ENCODE measurements at regions of chr17 and their contacts with region 1.

Region 1: GRCh38 chr17:48363161-48363560 is 66.9 kb downstream of the SKAP1 start:
- DNase-seq: no peak
- ATAC-seq: no peak
- H3K4me3 ChIP-seq: no peak overlapping the region
- H3K27ac ChIP-seq: no peak overlapping the region
- H3K4me1 ChIP-seq: no peaks in the 10 kb centered on the region
- H3K27me3 ChIP-seq: no peaks in the 10 kb centered on the region
- CTCF ChIP-seq: no peak
- EP300 ChIP-seq: no peak
- POLR2A ChIP-seq: no peak
- RAD21 ChIP-seq: no peak

Region 2: DNA sequence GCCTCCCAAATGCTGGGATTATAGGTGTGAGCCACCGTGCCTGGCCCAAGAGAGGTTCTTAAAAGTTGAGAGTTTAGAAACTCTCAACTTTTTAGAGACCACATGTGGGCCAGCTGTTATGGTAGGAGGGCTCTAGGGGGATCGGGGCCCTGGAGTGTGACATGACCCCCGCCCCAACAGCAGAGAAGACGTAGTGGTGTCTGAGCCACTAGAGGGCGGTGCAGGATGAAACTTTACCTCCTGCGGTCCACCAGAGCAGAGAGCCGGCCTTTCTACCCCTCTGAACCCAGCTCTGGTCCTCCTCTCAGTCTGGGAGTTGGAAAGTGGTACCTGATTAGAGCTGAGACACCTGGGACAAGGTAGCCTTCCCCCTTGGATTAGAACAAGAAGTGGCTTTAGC is 384.8 kb before region 1 on chr17:
- CTCF ChIA-PET with region 1: no interaction called
- POLR2A ChIA-PET with region 1: no interaction called
- RAD21 ChIA-PET with region 1: no interaction called
- SMC1A ChIA-PET with region 1: no interaction called
- in situ Hi-C with region 1: no loop called
- intact Hi-C with region 1: no loop called
- DNase-seq: no peak
- ATAC-seq: peak; percentile 98
- H3K4me3 ChIP-seq: no peak overlapping the region
- H3K27ac ChIP-seq: no peak overlapping the region
- H3K4me1 ChIP-seq: no peaks in the 10 kb centered on the region; the same call in 1 of the 2 replicates
- H3K27me3 ChIP-seq: no peaks in the 10 kb centered on the region
- CTCF ChIP-seq: peak; percentile 73 to 86 (median 77)
- EP300 ChIP-seq: no peak
- POLR2A ChIP-seq: no peak
- RAD21 ChIP-seq: peak; percentile 86

Region 3: GRCh38 chr17:48344246-48344645 is 18.9 kb before region 1 on chr17:
- CTCF ChIA-PET with region 1: interaction called, 7 read pairs
- POLR2A ChIA-PET with region 1: no interaction called
- RAD21 ChIA-PET with region 1: interaction called, 3 read pairs
- SMC1A ChIA-PET with region 1: interaction called, 18 read pairs
- in situ Hi-C with region 1: no loop called
- intact Hi-C with region 1: no loop called
- DNase-seq: no peak
- ATAC-seq: no peak
- H3K4me3 ChIP-seq: no peak overlapping the region
- H3K27ac ChIP-seq: no peak overlapping the region
- H3K4me1 ChIP-seq: no peaks in the 10 kb centered on the region
- H3K27me3 ChIP-seq: no peaks in the 10 kb centered on the region
- CTCF ChIP-seq: no peak
- EP300 ChIP-seq: no peak
- POLR2A ChIP-seq: no peak
- RAD21 ChIP-seq: no peak

Region 4: GRCh38 chr17:48374650-48375230 is 11.6 kb after region 1 on chr17:
- CTCF ChIA-PET with region 1: interaction called, 10 read pairs
- POLR2A ChIA-PET with region 1: interaction called, 4 read pairs
- RAD21 ChIA-PET with region 1: interaction called, 6 read pairs
- SMC1A ChIA-PET with region 1: interaction called, 8 read pairs
- in situ Hi-C with region 1: no loop called
- intact Hi-C with region 1: no loop called
- DNase-seq: no peak
- ATAC-seq: peak; percentile 92
- H3K4me3 ChIP-seq: no peak overlapping the region
- H3K27ac ChIP-seq: no peak overlapping the region
- H3K4me1 ChIP-seq: no peaks in the 10 kb centered on the region
- H3K27me3 ChIP-seq: no peaks in the 10 kb centered on the region
- CTCF ChIP-seq: peak; percentile 21 to 64 (median 54); a peak in 5 of 6 replicates
- EP300 ChIP-seq: no peak
- POLR2A ChIP-seq: no peak
- RAD21 ChIP-seq: peak; percentile 63

Region 5: DNA sequence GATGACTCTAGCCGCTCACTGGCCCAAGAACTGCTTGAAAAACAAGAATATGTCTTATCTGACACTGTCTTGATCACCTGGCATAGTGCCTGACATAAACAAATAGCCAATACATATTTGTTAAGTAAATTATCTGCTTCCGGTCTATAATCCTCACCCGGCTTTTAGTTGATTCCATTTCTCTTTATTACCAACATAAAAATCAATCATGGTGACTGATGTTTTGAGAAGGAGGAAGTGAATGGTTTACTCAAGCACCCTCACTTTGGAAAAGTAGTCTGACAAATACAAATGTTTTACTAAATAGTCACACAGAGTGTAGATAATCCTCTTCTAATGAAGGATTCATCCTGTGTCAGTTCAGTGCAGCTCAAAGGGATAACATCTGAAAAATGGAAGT is 19.8 kb after region 1 on chr17:
- CTCF ChIA-PET with region 1: interaction called, 5 read pairs
- POLR2A ChIA-PET with region 1: interaction called, 4 read pairs
- RAD21 ChIA-PET with region 1: interaction called, 6 read pairs
- SMC1A ChIA-PET with region 1: interaction called, 13 read pairs
- in situ Hi-C with region 1: no loop called
- intact Hi-C with region 1: no loop called
- DNase-seq: no peak
- ATAC-seq: no peak
- H3K4me3 ChIP-seq: no peak overlapping the region
- H3K27ac ChIP-seq: no peak overlapping the region
- H3K4me1 ChIP-seq: no peaks in the 10 kb centered on the region
- H3K27me3 ChIP-seq: no peaks in the 10 kb centered on the region
- CTCF ChIP-seq: no peak
- EP300 ChIP-seq: no peak
- POLR2A ChIP-seq: no peak
- RAD21 ChIP-seq: no peak

Measured in GM12878 (cell line).